Calu3 (cell line): ENCODE measurements at regions of chr15 and their contacts with region 1.

Region 1: DNA sequence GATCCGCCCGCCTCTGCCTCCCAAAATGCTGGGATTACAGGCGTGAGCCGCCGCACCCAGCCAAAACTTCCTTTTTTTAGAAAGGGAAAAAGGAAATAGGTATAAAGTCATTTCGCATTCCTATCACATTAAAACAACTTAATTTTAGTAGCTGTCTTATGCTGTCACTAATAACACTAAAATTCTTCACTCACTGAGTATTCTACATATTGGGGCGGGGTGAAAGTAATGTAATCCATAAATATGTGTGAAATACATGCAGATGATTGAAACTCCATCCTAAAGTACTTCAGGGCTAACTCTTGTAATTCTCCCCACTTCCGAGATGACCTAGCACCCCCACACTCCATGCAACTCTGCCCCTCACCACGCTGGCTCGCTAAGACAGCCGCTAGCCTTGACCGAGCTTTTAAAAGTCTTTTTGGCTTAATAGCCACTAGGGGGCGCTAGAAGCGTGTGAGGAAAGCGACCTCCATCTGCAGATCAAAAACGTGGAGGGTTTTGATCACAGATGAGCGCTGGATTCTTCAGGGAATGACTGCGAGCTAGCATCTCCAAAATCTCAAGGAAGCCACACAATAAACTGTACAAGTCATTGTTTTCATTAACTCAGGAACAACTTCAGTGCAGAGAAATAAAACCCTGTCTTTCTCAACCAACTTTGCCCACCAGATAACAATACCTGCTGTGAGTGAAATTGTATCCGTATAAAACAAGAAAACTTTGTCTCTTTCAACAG is 129.3 kb upstream of the IGF1R start:
- DNase-seq: peak; percentile 58
- H3K4me3 Mint-ChIP-seq: no peak overlapping the region
- H3K27ac Mint-ChIP-seq: no peak overlapping the region
- H3K4me1 Mint-ChIP-seq: peaks cover 9% of the 10 kb centered on the region
- H3K27me3 Mint-ChIP-seq: peaks cover 5% of the 10 kb centered on the region
- CTCF ChIP-seq: peak; percentile 83

Region 2: GRCh38 chr15:98658831-98659699 is 140.1 kb after region 1 on chr15:
- CTCF ChIA-PET with region 1: interaction called, 5 read pairs
- intact Hi-C with region 1: loop called (anchors 2 kb)
- DNase-seq: peak; percentile 71
- H3K4me3 Mint-ChIP-seq: no peak overlapping the region
- H3K27ac Mint-ChIP-seq: no peak overlapping the region
- H3K4me1 Mint-ChIP-seq: peaks cover 43% of the 10 kb centered on the region
- H3K27me3 Mint-ChIP-seq: no peaks in the 10 kb centered on the region
- CTCF ChIP-seq: peak; percentile 68

Region 3: GRCh38 chr15:98850961-98851573 is 332.1 kb after region 1 on chr15:
- CTCF ChIA-PET with region 1: interaction called, 25 read pairs
- intact Hi-C with region 1: no loop called
- DNase-seq: peak; percentile 87
- H3K4me3 Mint-ChIP-seq: peak overlapping the region; percentile 94
- H3K27ac Mint-ChIP-seq: peak overlapping the region; percentile 81
- H3K4me1 Mint-ChIP-seq: peaks cover 51% of the 10 kb centered on the region
- H3K27me3 Mint-ChIP-seq: no peaks in the 10 kb centered on the region
- CTCF ChIP-seq: peak; percentile 69

Region 4: GRCh38 chr15:98896802-98897732 is 378.1 kb after region 1 on chr15:
- CTCF ChIA-PET with region 1: interaction called, 4 read pairs
- intact Hi-C with region 1: loop called (anchors 2 kb)
- DNase-seq: peak; percentile 49
- H3K4me3 Mint-ChIP-seq: peak overlapping the region; percentile 56
- H3K27ac Mint-ChIP-seq: peak overlapping the region; percentile 95
- H3K4me1 Mint-ChIP-seq: peaks cover 24% of the 10 kb centered on the region
- H3K27me3 Mint-ChIP-seq: no peaks in the 10 kb centered on the region
- CTCF ChIP-seq: no peak

Region 5: DNA sequence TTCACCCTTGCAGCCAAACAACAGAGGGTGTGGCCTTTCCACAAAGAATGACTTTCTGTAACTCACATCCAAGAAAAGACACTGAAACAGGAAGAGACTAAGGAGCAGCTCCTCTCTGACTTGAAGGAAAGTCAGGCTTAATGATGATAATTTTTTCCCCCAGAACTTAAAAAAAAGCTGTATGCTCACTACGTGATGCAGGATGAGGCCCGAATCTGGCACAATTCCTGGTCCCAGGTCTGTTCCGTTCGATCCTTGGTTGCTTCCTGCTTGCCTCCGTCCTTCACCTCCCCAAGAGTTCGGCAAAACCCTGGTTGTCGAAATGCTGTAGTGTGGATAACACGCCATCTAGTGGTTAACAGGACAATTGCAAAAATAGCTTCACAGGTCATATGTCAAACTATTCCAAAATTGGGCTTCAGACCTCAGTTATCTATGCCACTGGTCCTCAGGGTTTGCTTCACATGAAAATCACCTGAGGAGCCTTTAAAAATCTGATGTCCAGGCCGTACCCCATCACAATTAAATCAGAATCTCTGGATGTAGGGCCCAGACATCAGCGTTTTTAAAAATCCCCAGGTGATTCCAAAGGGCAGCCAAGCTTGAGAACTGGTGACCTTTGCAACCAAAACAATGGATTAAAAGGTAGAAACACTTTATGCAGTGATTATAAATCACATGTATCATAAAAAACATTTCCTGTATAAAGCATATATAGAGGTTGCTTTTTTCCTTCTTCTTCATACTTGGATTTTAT is 557.7 kb after region 1 on chr15:
- CTCF ChIA-PET with region 1: interaction called, 16 read pairs
- intact Hi-C with region 1: loop called (anchors 2 kb)
- DNase-seq: peak; percentile 61
- H3K4me3 Mint-ChIP-seq: peak overlapping the region; percentile 56
- H3K27ac Mint-ChIP-seq: peak overlapping the region; percentile 43
- H3K4me1 Mint-ChIP-seq: peaks cover 10% of the 10 kb centered on the region
- H3K27me3 Mint-ChIP-seq: peaks cover 57% of the 10 kb centered on the region
- CTCF ChIP-seq: peak; percentile 66